Activated CD8-positive, alpha-beta T cell treated with anti-CD3 and anti-CD28 coated beads for 36 hours (primary cell): ENCODE measurements at regions of chr21 and their contacts with region 1.

Region 1: DNA sequence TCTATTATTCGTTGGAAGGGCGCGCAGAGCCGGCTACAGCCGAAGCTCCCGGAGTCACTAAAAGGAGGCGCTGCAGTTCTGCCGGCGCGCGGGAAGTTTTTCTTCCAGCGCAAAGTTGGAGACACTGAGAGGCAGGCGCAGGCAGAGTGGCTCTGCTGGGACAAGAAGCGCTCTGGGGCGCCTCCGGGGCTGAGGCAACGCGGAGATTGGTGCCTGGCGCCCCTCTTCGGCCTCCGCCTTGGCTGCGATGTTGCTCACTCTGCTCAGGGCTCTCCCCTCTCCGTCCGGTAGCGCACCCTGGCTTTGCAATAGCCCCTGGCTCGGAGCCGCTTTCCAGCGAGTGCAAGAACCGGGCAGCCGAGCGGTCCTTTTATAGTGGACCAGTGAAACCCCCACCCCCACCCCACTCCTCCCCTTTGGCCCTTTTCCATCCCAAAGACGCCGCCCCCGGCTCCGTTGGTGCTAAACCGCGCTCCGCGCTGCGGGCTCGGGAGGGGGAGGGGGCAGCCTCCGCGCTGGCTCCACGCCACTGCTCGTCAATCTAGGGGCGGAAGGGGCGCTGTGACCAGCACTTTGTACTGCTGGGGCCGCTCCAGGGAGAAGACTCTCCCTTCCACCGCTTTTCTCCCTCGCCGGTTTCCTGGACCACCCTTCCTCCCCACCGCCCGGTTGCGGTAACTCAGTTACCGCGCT is at the start of gene ADAMTS1:
- DNase-seq: peak; percentile 26
- ATAC-seq: peak; percentile 55
- H3K4me3 Mint-ChIP-seq: peak within 1 kb of the TSS; percentile 55
- H3K27ac Mint-ChIP-seq: no peak within 1 kb of the TSS
- H3K4me1 Mint-ChIP-seq: peaks cover 32% of the 10 kb centered on the region
- H3K27me3 Mint-ChIP-seq: peaks cover 59% of the 10 kb centered on the region
- CTCF ChIP-seq: no peak
- total RNA-seq, gene ADAMTS1: 0.20 TPM in 1 of 2 experiments, not detected in the other

Region 2: DNA sequence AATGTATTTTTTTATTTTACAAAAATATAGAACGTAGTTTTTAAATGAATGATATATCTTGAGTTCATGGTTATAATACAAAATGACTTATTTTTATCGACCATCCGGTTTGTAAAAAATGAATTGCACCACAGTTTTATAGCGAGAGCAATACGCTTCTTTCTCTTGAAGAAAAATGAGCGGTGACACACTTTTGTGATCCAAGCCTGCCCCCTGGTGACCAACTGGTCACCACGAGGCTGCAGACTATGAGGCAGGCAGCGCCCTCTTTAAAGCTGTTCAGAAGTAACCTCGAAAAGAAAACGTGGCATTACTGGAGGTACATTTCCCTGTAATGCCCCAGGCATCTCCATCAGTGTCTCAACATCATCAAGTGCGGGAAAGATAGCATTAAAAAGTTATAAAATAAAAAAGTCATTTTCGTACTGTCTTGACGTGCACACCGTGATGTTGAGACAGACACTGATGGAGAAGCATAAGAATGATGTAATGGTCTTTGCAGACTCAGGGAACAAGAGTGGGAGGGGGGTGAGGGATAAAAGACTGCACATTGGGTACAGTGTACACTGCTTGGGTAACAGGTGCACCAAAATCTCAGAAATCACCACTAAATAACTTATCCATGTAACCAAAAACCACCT is 855.9 kb after region 1 on chr21:
- CTCF ChIA-PET with region 1: interaction called, 9 read pairs
- POLR2A ChIA-PET with region 1: no interaction called
- intact Hi-C with region 1: loop called (anchors 1 kb)
- DNase-seq: peak; percentile 80
- ATAC-seq: peak; percentile 70
- H3K4me3 Mint-ChIP-seq: no peak overlapping the region
- H3K27ac Mint-ChIP-seq: no peak overlapping the region
- H3K4me1 Mint-ChIP-seq: no peaks in the 10 kb centered on the region
- H3K27me3 Mint-ChIP-seq: no peaks in the 10 kb centered on the region
- CTCF ChIP-seq: peak; percentile 75